Mucosa of descending colon (tissue), 3 donors: ENCODE measurements at regions of chr17 and their contacts with region 1.

Region 1: GRCh38 chr17:76307299-76307965 is 644 bp downstream of the QRICH2 start:
- DNase-seq: no peak
- ATAC-seq: no peak
- H3K4me3 ChIP-seq: no peak overlapping the region
- H3K4me1 ChIP-seq: no peaks in the 10 kb centered on the region
- CTCF ChIP-seq: no peak

Region 2: DNA sequence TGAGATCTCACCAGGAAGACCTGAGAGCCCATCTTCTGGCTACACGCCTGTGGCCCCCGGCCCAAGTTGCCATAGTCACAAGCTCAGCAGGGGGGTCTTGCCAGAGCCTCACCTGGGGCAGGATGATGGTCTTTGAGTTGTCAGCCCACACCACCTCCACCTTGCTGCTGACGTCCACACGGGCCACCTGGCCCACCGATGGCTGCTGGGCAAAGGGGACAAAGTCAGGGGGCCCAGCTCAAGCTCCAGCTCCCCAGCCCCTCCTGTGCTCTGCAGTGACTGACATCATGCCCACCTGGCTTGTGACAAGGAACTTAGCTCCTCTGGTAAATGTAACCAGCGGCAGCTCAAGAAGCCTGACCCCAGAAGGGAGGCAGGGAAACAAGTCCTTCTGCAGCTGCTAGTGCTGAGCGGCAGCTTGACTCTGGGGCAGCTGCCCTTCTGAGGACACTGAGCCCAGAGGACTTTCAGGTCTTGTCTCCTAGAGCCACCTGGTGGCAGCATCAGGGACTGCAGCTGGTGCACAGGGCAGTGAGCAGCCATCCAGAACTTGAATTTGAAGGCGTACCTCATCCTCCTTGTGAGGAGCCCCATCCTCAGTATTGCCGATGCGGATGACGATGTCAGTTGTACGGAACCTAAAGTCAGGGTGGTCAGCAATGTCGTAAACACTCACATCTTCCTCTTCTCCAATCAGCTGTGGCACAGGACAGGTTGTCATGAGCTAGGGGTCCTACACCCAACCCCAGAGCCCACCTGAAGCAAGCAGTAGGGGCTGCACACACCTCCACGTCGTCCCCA is 90.5 kb after region 1 on chr17:
- intact Hi-C with region 1: loop called (anchors 5 kb)
- DNase-seq: peak; percentile 85 to 98 (median 93)
- ATAC-seq: peak; percentile 92
- H3K4me3 ChIP-seq: no peak overlapping the region
- H3K4me1 ChIP-seq: no peaks in the 10 kb centered on the region
- CTCF ChIP-seq: peak; percentile 96